ENCODE measurements at regions of chr12 and their contacts with region 1.

Region 1: GRCh38 chr12:47207340-47207717 is 127.6 kb upstream of the AMIGO2 start:
- DNase-seq: peak; percentile 73
- H3K4me3 Mint-ChIP-seq: peak overlapping the region; percentile 81
- H3K27ac Mint-ChIP-seq: peak overlapping the region; percentile 79
- H3K4me1 Mint-ChIP-seq: peaks cover 81% of the 10 kb centered on the region
- H3K27me3 Mint-ChIP-seq: no peaks in the 10 kb centered on the region

Region 2: GRCh38 chr12:47224563-47225133 is 17.3 kb after region 1 on chr12:
- CTCF ChIA-PET with region 1: interaction called, 10 read pairs
- DNase-seq: no peak
- H3K4me3 Mint-ChIP-seq: peak overlapping the region; percentile 71
- H3K27ac Mint-ChIP-seq: no peak overlapping the region
- H3K4me1 Mint-ChIP-seq: peaks cover 82% of the 10 kb centered on the region
- H3K27me3 Mint-ChIP-seq: no peaks in the 10 kb centered on the region

Measured in activated naive CD4-positive, alpha-beta T cell treated with anti-CD3 and anti-CD28 coated beads, Interleukin-2, amount 10 ng/mL, durations not matched to agents 7 days and 5 days (primary cell).